Ovary (tissue), 10 donors: ENCODE measurements at regions of chr10 and their contacts with region 1.

Region 1: GRCh38 chr10:62647375-62648092 is 157.0 kb upstream of the ADO start:
- DNase-seq: no peak
- H3K4me3 ChIP-seq: no peak overlapping the region
- H3K27ac ChIP-seq: no peak overlapping the region
- H3K4me1 ChIP-seq: no peaks in the 10 kb centered on the region
- H3K27me3 ChIP-seq: no peaks in the 10 kb centered on the region
- CTCF ChIP-seq: no peak
- EP300 ChIP-seq: no peak
- POLR2A ChIP-seq: no peak

Region 2: GRCh38 chr10:62373995-62374861 is 273.3 kb before region 1 on chr10 and contains the start of gene ZNF365:
- intact Hi-C with region 1: no loop called
- DNase-seq: peak in 3 of 5 donors; percentile 18 to 42 (median 33)
- H3K4me3 ChIP-seq: peak within 1 kb of the TSS; percentile 38
- H3K27ac ChIP-seq: no peak within 1 kb of the TSS
- H3K4me1 ChIP-seq: peaks cover 1% of the 10 kb centered on the region
- H3K27me3 ChIP-seq: no peaks in the 10 kb centered on the region
- CTCF ChIP-seq: no peak
- EP300 ChIP-seq: no peak
- POLR2A ChIP-seq: no peak
- total RNA-seq, gene ZNF365: 0.20 to 1.6 (median 0.45) TPM

Region 3: GRCh38 chr10:62724465-62724864 is 76.9 kb after region 1 on chr10:
- intact Hi-C with region 1: loop called in 1 of 4 experiments (anchors 2 kb)
- DNase-seq: no peak
- H3K4me3 ChIP-seq: no peak overlapping the region
- H3K27ac ChIP-seq: no peak overlapping the region
- H3K4me1 ChIP-seq: no peaks in the 10 kb centered on the region
- H3K27me3 ChIP-seq: no peaks in the 10 kb centered on the region
- CTCF ChIP-seq: no peak
- EP300 ChIP-seq: no peak
- POLR2A ChIP-seq: no peak